ENCODE measurements at regions of chr15 and their contacts with region 1.

Region 1: DNA sequence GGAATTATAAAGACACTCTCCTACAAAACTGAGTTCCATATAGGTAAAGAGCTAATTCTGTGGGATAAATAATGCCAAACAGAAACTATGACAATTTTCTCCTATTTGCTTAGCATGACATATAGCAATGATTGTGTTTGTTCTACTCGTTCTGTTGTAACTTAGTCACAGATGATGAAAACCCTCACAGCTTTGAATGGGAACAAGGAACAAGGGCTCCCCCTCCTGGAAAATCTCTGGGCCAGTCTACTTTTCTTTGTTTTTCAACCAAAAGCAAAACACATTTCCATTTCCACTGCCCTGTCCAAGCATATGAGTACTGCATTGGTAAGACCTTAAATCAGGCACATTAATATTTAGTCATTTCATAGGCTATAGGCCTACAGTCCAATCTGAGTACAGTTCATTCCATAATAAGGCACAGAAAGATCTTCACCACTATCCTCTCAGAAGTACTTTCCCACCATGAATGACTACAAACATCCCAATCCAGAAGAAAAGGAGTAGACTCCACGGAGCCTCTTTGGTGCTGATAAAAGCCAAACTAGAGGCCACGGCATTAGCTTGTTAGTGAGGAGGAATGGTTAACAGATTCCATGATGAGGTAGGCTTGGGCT is 67.1 kb downstream of the ATP8B4 start:
- DNase-seq: peak; percentile 91
- ATAC-seq: peak; percentile 61
- H3K4me3 ChIP-seq: no peak overlapping the region
- H3K27ac ChIP-seq: peak overlapping the region; percentile 73
- H3K4me1 ChIP-seq: peaks cover 24% of the 10 kb centered on the region
- H3K27me3 ChIP-seq: no peaks in the 10 kb centered on the region
- CTCF ChIP-seq: peak; percentile 94
- POLR2A ChIP-seq: no peak; the same call in 1 of the 2 replicates
- RAD21 ChIP-seq: peak; percentile 95

Region 2: DNA sequence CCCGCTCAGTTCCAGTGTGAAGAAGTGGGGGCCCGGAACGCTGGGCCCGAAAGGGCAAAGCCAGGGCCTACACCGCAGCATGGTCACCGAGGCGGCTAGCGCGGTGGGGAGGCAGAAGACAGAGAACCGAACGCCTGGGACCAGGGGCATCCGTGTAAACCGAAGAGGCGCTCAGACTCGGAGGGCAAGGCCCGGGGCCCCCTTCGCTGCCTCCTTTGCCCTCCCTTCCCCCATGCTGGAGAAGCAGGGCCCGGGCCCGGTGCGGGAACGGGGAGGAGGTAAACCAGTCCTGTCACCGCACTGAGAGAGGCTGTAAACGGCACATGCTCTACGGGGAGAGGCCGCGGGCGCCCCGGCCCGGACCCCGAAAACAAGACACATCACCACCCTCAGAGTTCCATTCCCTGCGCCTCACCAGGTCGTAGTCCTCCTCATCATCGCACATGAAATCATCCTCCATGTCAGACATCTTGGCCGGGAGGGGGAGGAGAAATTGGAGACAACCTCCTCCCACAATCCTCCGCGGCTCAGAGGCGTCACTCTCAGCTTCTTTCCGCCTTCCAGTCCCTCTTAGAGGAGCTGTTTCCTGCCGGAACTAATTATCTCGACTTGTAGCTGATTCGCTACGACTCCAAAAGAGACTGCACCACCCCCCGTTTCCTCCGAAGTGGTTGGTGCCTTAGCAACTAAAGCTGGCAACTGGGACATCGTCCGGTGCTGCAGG is 896.6 kb before region 1 on chr15 and contains the start of gene COPS2:
- CTCF ChIA-PET with region 1: no interaction called
- POLR2A ChIA-PET with region 1: no interaction called
- dilution Hi-C with region 1: no loop called
- in situ Hi-C with region 1: no loop called
- intact Hi-C with region 1: loop called (anchors 10 kb)
- DNase-seq: peak; percentile 99
- ATAC-seq: peak; percentile 97
- H3K4me3 ChIP-seq: peak within 1 kb of the TSS; percentile 70
- H3K27ac ChIP-seq: peak within 1 kb of the TSS; percentile 78
- H3K4me1 ChIP-seq: no peaks in the 10 kb centered on the region
- H3K27me3 ChIP-seq: no peaks in the 10 kb centered on the region
- CTCF ChIP-seq: no peak
- POLR2A ChIP-seq: peak; percentile 86
- RAD21 ChIP-seq: no peak
- total RNA-seq, gene COPS2: 75.6 and 103 TPM in 2 replicates

Region 3: GRCh38 chr15:49242820-49243219 is 809.1 kb before region 1 on chr15:
- CTCF ChIA-PET with region 1: no interaction called
- POLR2A ChIA-PET with region 1: no interaction called
- dilution Hi-C with region 1: no loop called
- in situ Hi-C with region 1: loop called (anchors 5 kb)
- intact Hi-C with region 1: no loop called
- DNase-seq: peak; percentile 95
- ATAC-seq: peak; percentile 81
- H3K4me3 ChIP-seq: no peak overlapping the region
- H3K27ac ChIP-seq: peak overlapping the region; percentile 91
- H3K4me1 ChIP-seq: peaks cover 15% of the 10 kb centered on the region
- H3K27me3 ChIP-seq: no peaks in the 10 kb centered on the region
- CTCF ChIP-seq: no peak
- POLR2A ChIP-seq: no peak
- RAD21 ChIP-seq: no peak

Region 4: DNA sequence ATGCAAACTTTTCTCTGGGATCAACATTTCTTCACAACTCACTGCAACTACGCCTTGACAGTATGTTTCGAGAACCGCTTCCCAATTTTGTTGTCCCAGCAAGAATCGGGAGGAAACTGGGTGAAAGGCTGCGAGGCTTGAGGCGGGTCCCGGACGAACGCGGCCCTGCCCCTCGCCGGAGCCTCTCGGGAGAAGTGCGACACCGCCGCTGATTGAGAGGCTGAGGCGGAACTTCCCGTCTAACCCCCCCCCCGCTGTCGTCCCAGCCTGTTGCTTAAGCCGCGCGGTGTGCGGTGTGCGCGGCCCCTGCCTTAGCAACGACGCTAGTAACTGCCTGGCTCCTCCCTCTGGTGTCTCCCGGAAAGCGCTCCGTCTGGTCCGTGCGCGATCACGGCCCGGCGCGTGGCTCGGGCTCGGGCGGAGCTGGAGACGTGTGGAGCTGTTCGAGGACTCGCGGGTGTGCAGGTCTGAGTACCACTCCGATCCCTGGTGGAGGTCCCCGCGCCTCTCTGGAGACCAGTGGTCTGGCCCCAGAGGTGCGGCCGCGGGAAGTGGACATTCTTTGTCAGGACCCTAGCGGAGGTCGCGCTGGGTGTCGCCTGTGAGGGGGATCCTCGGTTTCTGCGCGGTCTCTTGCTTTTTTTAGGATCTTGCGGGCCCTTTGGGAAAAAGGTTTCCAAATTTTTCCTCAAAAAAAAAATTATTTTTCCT is 431.1 kb before region 1 on chr15 and contains the starts of genes DTWD1 and FAM227B:
- CTCF ChIA-PET with region 1: interaction called, 3 read pairs
- POLR2A ChIA-PET with region 1: interaction called, 4 read pairs
- dilution Hi-C with region 1: no loop called
- in situ Hi-C with region 1: no loop called
- intact Hi-C with region 1: loop called (anchors 2 kb)
- DNase-seq: peak; percentile 98
- ATAC-seq: peak; percentile 98
- H3K4me3 ChIP-seq: peak within 1 kb of the TSS; percentile 77
- H3K27ac ChIP-seq: peak within 1 kb of the TSS; percentile 95
- H3K4me1 ChIP-seq: peaks cover 3% of the 10 kb centered on the region; the same call in 1 of the 2 replicates
- H3K27me3 ChIP-seq: no peaks in the 10 kb centered on the region
- CTCF ChIP-seq: no peak
- POLR2A ChIP-seq: peak; percentile 92
- RAD21 ChIP-seq: peak; percentile 32
- total RNA-seq, gene DTWD1: 20.1 and 24.4 TPM in 2 replicates
- total RNA-seq, gene FAM227B: 1.8 and 2.5 TPM in 2 replicates

Region 5: GRCh38 chr15:49901996-49902684 is 149.8 kb before region 1 on chr15:
- CTCF ChIA-PET with region 1: interaction called, 4 read pairs
- POLR2A ChIA-PET with region 1: no interaction called
- dilution Hi-C with region 1: no loop called
- in situ Hi-C with region 1: no loop called
- intact Hi-C with region 1: loop called (anchors 1 kb)
- DNase-seq: peak; percentile 65
- ATAC-seq: peak; percentile 65
- H3K4me3 ChIP-seq: no peak overlapping the region
- H3K27ac ChIP-seq: peak overlapping the region; percentile 98
- H3K4me1 ChIP-seq: peaks cover 24% of the 10 kb centered on the region
- H3K27me3 ChIP-seq: no peaks in the 10 kb centered on the region
- CTCF ChIP-seq: peak; percentile 66
- POLR2A ChIP-seq: no peak
- RAD21 ChIP-seq: peak; percentile 65

Region 6: GRCh38 chr15:50017522-50017921 is 34.4 kb before region 1 on chr15:
- CTCF ChIA-PET with region 1: no interaction called
- POLR2A ChIA-PET with region 1: no interaction called
- dilution Hi-C with region 1: no loop called
- in situ Hi-C with region 1: no loop called
- intact Hi-C with region 1: no loop called
- DNase-seq: no peak
- ATAC-seq: no peak
- H3K4me3 ChIP-seq: no peak overlapping the region
- H3K27ac ChIP-seq: no peak overlapping the region
- H3K4me1 ChIP-seq: 0 out of 2 replicates have a peak, but pooled peaks cover 2% of the 10 kb centered on the region
- H3K27me3 ChIP-seq: no peaks in the 10 kb centered on the region
- CTCF ChIP-seq: no peak
- POLR2A ChIP-seq: no peak
- RAD21 ChIP-seq: no peak

Region 7: GRCh38 chr15:50315814-50316630 is 264.1 kb after region 1 on chr15:
- CTCF ChIA-PET with region 1: no interaction called
- POLR2A ChIA-PET with region 1: no interaction called
- dilution Hi-C with region 1: no loop called
- in situ Hi-C with region 1: no loop called
- intact Hi-C with region 1: loop called (anchors 5 kb)
- DNase-seq: peak; percentile 68
- ATAC-seq: peak; percentile 81
- H3K4me3 ChIP-seq: no peak overlapping the region
- H3K27ac ChIP-seq: no peak overlapping the region
- H3K4me1 ChIP-seq: peaks cover 2% of the 10 kb centered on the region; the same call in 1 of the 2 replicates
- H3K27me3 ChIP-seq: no peaks in the 10 kb centered on the region
- CTCF ChIP-seq: peak; percentile 71
- POLR2A ChIP-seq: no peak
- RAD21 ChIP-seq: peak; percentile 77